ENCODE measurements at regions of chrX and their contacts with region 1.

Region 1: DNA sequence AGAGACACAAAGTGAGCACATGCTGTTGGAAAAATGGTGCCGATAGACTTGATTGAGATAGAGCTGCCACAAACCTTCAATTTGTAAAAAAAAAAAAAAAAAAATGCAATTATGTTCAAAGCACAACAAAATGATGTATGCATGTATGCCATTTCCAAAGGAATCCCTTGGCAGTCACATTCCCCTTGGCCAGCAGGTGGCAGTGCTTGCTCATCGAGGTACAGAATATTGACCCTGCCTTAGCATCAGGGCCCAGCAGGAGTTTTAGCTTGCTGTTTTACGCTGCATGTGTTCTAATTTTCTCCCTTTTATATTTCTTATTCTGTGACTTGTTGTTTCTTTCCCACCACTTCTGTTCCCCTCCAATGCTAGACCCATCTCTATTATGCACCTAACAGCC is 34.5 kb upstream of the CYBB start:
- DNase-seq: peak; percentile 81
- ATAC-seq: peak; percentile 75
- H3K4me3 ChIP-seq: no peak overlapping the region
- H3K4me3 Mint-ChIP-seq: peak overlapping the region; percentile 67
- H3K27ac ChIP-seq: peak overlapping the region; percentile 50 to 70
- H3K27ac Mint-ChIP-seq: peak overlapping the region; percentile 88
- H3K4me1 ChIP-seq: peaks cover 20 to 24% of the 10 kb centered on the region in 2 donors
- H3K4me1 Mint-ChIP-seq: peaks cover 21% of the 10 kb centered on the region
- H3K27me3 ChIP-seq: no peaks in the 10 kb centered on the region
- H3K27me3 Mint-ChIP-seq: no peaks in the 10 kb centered on the region
- CTCF ChIP-seq: peak; percentile 73

Region 2: DNA sequence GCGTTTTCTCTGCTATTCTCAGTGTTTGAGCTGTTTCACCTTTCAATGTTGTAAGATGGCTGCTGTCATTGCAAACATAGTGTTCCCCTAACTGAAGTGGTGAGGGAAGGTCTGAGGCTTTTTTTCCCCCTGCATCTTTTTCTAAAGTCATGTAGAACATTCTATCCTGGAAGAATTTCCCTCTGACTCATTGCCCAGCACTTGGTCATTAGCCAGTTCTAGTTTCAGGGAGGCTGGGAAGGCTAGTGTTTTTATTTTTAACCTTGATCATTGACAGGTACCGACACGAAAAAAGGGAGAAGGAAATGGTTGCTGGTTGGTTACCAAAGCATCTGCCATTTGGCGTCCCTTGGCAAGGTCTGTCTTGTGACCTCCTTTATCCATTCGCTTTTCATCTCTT is 167.3 kb before region 1 on chrX:
- CTCF ChIA-PET with region 1: no interaction called
- POLR2A ChIA-PET with region 1: no interaction called
- intact Hi-C with region 1: no loop called
- DNase-seq: no peak
- ATAC-seq: no peak
- H3K4me3 ChIP-seq: no peak overlapping the region
- H3K4me3 Mint-ChIP-seq: no peak overlapping the region
- H3K27ac ChIP-seq: no peak overlapping the region
- H3K27ac Mint-ChIP-seq: no peak overlapping the region
- H3K4me1 ChIP-seq: no peaks in the 10 kb centered on the region
- H3K4me1 Mint-ChIP-seq: peaks cover 2% of the 10 kb centered on the region
- H3K27me3 ChIP-seq: no peaks in the 10 kb centered on the region
- H3K27me3 Mint-ChIP-seq: peaks cover 16% of the 10 kb centered on the region
- CTCF ChIP-seq: no peak

Region 3: GRCh38 chrX:37787423-37787869 is 42.1 kb after region 1 on chrX:
- CTCF ChIA-PET with region 1: interaction called, 65 read pairs
- POLR2A ChIA-PET with region 1: interaction called, 3 read pairs
- intact Hi-C with region 1: loop called (anchors 1 kb)
- DNase-seq: peak; percentile 73
- ATAC-seq: peak; percentile 63
- H3K4me3 ChIP-seq: peak overlapping the region; percentile 15 to 50 (median 30)
- H3K4me3 Mint-ChIP-seq: peak overlapping the region; percentile 75
- H3K27ac ChIP-seq: peak overlapping the region; percentile 84 to 87
- H3K27ac Mint-ChIP-seq: peak overlapping the region; percentile 94
- H3K4me1 ChIP-seq: peaks cover 71 to 82% of the 10 kb centered on the region in 2 donors
- H3K4me1 Mint-ChIP-seq: peaks cover 71% of the 10 kb centered on the region
- H3K27me3 ChIP-seq: peaks cover 0 to 3% (median 0%) of the 10 kb centered on the region in 4 experiments
- H3K27me3 Mint-ChIP-seq: no peaks in the 10 kb centered on the region
- CTCF ChIP-seq: no peak

Region 4: DNA sequence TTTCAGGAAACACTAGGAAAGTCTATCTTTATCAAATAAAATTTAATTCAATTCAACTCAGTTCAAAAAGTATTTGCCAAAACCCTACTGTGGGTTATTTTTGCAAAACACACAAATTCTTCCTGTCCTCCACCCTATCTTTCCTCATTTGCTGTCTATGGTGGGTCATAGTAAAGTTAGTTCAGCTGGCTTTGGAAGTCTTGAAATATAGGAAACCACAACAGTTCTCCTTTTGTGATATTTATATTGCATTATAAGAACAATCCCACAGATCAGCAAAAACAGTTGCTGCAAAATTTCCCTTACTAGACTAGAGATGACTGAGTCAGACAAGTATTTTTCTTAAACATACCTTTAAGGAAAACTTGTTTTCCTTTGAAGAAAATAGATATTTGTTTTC is 56.7 kb after region 1 on chrX:
- CTCF ChIA-PET with region 1: interaction called, 23 read pairs
- POLR2A ChIA-PET with region 1: no interaction called
- intact Hi-C with region 1: no loop called
- DNase-seq: no peak
- ATAC-seq: no peak
- H3K4me3 ChIP-seq: no peak overlapping the region
- H3K4me3 Mint-ChIP-seq: no peak overlapping the region
- H3K27ac ChIP-seq: peak overlapping the region in 1 of 2 donors; percentile 3
- H3K27ac Mint-ChIP-seq: peak overlapping the region; percentile 76
- H3K4me1 ChIP-seq: peaks cover 11 to 19% of the 10 kb centered on the region in 2 donors
- H3K4me1 Mint-ChIP-seq: peaks cover 40% of the 10 kb centered on the region
- H3K27me3 ChIP-seq: no peaks in the 10 kb centered on the region
- H3K27me3 Mint-ChIP-seq: no peaks in the 10 kb centered on the region
- CTCF ChIP-seq: no peak

Region 5: GRCh38 chrX:37825209-37825842 is 80.0 kb after region 1 on chrX:
- CTCF ChIA-PET with region 1: interaction called, 279 read pairs
- POLR2A ChIA-PET with region 1: interaction called, 18 read pairs
- intact Hi-C with region 1: loop called (anchors 1 kb)
- DNase-seq: peak; percentile 68
- ATAC-seq: peak; percentile 87
- H3K4me3 ChIP-seq: peak overlapping the region in 1 of 5 experiments; percentile 24
- H3K4me3 Mint-ChIP-seq: peak overlapping the region; percentile 21
- H3K27ac ChIP-seq: no peak overlapping the region
- H3K27ac Mint-ChIP-seq: peak overlapping the region; percentile 85
- H3K4me1 ChIP-seq: peaks cover 23 to 26% of the 10 kb centered on the region in 2 donors
- H3K4me1 Mint-ChIP-seq: peaks cover 49% of the 10 kb centered on the region
- H3K27me3 ChIP-seq: no peaks in the 10 kb centered on the region
- H3K27me3 Mint-ChIP-seq: no peaks in the 10 kb centered on the region
- CTCF ChIP-seq: peak; percentile 78

Region 6: DNA sequence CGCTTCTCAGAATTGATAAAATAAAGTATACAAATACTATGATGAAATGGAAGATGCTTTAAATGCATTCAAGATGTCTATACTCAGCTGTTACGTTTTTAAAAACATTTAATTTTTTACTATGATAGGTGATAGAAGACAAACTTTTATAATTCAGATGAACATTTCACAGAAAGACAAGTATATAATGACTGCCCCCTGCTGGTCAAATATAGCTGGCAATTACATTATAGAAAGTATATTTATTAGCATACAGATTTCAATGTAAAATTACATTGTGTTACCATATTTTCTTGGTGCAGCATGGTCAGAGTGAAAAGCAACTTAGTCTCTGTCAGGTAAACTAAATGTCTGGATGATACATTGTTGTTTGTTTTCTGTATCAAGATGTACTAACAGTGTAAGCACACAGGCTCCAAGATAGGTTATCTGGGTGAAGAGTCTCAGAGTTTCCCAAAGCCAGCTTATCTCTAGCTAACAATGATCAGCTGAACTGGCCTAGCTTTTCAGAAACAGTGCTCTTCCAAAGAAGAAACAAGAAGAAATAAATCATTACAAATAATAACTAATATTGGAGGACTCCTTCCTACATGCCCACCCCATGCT is 421.2 kb after region 1 on chrX:
- CTCF ChIA-PET with region 1: interaction called, 12 read pairs
- POLR2A ChIA-PET with region 1: no interaction called
- intact Hi-C with region 1: no loop called
- DNase-seq: peak; percentile 37
- ATAC-seq: no peak
- H3K4me3 ChIP-seq: no peak overlapping the region
- H3K4me3 Mint-ChIP-seq: no peak overlapping the region
- H3K27ac ChIP-seq: no peak overlapping the region
- H3K27ac Mint-ChIP-seq: no peak overlapping the region
- H3K4me1 ChIP-seq: no peaks in the 10 kb centered on the region
- H3K4me1 Mint-ChIP-seq: no peaks in the 10 kb centered on the region
- H3K27me3 ChIP-seq: no peaks in the 10 kb centered on the region
- H3K27me3 Mint-ChIP-seq: peaks cover 3% of the 10 kb centered on the region
- CTCF ChIP-seq: peak; percentile 65